Right cardiac atrium (tissue), 5 donors: ENCODE measurements at regions of chr4 and their contacts with region 1.

Region 1: DNA sequence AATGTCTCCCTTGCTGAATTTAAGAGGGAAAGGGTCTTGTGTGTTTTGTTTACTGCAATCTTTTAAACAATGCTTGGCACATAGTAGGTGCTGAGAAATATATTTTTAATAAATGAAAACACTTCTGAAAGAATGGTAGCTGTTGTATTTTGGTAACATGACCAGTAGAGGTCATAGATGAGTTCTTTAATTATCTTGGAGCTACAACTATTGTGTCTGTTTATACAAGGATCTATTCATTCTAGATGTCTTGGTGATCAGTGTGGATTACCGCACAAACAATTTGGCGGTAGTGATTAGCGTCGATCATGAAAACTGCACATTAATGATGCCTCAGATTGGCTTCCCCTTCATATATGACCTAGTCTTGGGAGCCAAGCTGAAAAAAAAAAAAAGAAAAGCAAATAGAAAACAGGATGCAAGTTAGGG is 21.4 kb upstream of the SCRG1 start:
- DNase-seq: no peak
- ATAC-seq: no peak
- H3K4me3 ChIP-seq: no peak overlapping the region
- H3K27ac ChIP-seq: no peak overlapping the region
- H3K4me1 ChIP-seq: peaks cover 1% of the 10 kb centered on the region
- H3K27me3 ChIP-seq: no peaks in the 10 kb centered on the region

Region 2: GRCh38 chr4:173025131-173025530 is 395.2 kb before region 1 on chr4:
- intact Hi-C with region 1: loop called in 1 of 4 experiments (anchors 10 kb)
- DNase-seq: no peak
- ATAC-seq: peak; percentile 59 to 74
- H3K4me3 ChIP-seq: no peak overlapping the region
- H3K27ac ChIP-seq: no peak overlapping the region
- H3K4me1 ChIP-seq: no peaks in the 10 kb centered on the region
- H3K27me3 ChIP-seq: no peaks in the 10 kb centered on the region

Region 3: DNA sequence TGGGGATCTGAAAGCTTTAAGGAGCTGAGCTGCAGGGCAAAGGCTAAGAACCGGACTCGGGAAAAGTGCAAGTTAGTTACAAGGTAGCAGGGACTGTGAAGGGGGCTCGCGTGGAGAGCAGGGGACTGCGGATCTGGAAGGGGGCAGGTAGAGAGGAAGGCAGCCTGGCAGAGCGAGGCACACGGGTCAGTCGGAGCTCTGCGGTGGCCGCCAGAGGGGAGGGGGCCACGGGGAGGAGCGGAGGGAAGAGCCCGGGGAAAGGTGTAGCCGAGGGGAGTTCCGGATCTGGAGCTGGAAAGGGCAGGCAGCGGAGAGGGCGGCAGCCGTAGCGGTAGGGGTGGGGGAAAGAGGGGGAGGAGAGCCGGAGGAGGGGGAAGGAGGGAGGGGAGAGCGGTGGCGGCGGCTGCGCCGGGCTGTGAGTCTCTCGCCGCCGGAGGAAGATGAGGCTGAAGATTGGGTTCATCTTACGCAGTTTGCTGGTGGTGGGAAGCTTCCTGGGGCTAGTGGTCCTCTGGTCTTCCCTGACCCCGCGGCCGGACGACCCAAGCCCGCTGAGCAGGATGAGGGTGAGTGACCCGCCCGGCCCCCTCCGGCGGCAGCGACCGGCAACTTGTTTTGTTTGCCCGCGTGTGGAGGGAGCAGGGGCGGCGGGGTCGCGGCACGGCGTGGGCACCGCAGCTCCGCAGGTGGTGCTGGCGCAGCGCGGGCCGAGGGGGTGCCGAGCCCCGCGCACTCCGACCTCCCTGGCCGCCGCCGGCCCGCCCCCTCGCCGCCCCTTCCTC is 251.8 kb before region 1 on chr4 and contains the start of gene GALNT7:
- intact Hi-C with region 1: no loop called
- DNase-seq: peak; percentile 67 to 85 (median 85)
- ATAC-seq: peak; percentile 80 to 84
- H3K4me3 ChIP-seq: peak within 1 kb of the TSS; percentile 99
- H3K27ac ChIP-seq: peak within 1 kb of the TSS; percentile 85
- H3K4me1 ChIP-seq: no peaks in the 10 kb centered on the region
- H3K27me3 ChIP-seq: no peaks in the 10 kb centered on the region
- total RNA-seq, gene GALNT7: 7.0 to 11.0 (median 8.4) TPM

Region 4: DNA sequence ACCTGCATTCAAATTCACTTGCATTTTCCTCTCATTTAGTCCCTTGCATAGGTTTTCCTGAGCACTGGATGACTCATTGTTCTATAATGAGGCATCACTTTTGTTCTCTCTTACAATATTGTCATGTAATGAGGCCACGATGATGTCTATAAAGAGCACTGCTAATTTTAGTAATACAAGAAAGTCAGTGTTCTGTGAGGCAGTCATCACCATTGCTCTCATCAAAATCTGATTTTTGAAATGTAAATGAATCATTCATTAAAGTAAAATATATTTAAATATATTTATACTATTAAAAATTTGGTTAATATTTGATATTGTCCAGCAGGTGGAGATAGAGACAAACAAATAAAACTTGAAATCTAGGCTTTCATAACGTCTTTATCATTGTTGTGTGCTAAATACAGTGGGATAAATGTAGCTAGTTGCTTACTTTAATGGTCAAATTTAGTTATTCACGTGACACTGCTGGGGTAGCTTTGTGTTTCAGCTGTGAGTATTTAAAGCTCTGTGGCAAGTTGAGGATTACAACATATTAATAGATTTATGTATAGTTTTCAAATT is 101.6 kb before region 1 on chr4:
- intact Hi-C with region 1: loop called (anchors 2 to 5 kb)
- DNase-seq: no peak
- ATAC-seq: peak; percentile 50 to 52
- H3K4me3 ChIP-seq: no peak overlapping the region
- H3K27ac ChIP-seq: no peak overlapping the region
- H3K4me1 ChIP-seq: no peaks in the 10 kb centered on the region
- H3K27me3 ChIP-seq: no peaks in the 10 kb centered on the region

Region 5: GRCh38 chr4:173494013-173494970 is 74.0 kb after region 1 on chr4:
- intact Hi-C with region 1: loop called (anchors 2 to 10 kb)
- DNase-seq: peak; percentile 58 to 74 (median 71)
- ATAC-seq: peak; percentile 90 to 91
- H3K4me3 ChIP-seq: peak overlapping the region; percentile 41
- H3K27ac ChIP-seq: no peak overlapping the region
- H3K4me1 ChIP-seq: no peaks in the 10 kb centered on the region
- H3K27me3 ChIP-seq: no peaks in the 10 kb centered on the region